ENCODE measurements at regions of chr1 and their contacts with region 1.

Region 1: GRCh38 chr1:35014486-35014885 is 17.3 kb downstream of the ZMYM6 start:
- DNase-seq: no peak
- ATAC-seq: no peak
- H3K4me3 ChIP-seq: no peak overlapping the region
- H3K4me3 Mint-ChIP-seq: no peak overlapping the region
- H3K27ac ChIP-seq: no peak overlapping the region
- H3K27ac Mint-ChIP-seq: no peak overlapping the region
- H3K4me1 ChIP-seq: no peaks in the 10 kb centered on the region
- H3K4me1 Mint-ChIP-seq: peaks cover 0 to 2% (median 0%) of the 10 kb centered on the region in 3 donors
- H3K27me3 ChIP-seq: no peaks in the 10 kb centered on the region
- H3K27me3 Mint-ChIP-seq: no peaks in the 10 kb centered on the region

Region 2: DNA sequence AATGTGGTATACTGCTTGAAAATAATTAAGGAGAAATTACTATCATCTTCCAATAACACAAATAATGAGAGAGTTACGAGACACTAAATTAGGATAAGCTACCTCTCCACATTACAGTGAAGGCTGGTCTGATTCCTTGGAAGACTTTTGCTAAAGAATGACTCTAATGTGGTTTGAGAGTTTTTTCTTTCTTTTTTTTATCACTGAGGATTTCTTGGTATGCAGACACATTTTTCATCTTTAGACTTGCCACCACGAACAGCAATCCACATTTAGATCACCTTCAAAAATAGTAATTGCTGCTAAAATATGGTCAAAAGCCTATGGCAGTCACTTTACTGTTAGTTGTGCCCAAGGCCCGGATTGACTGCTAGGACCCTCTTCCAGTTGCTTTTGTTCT is 12.7 kb before region 1 on chr1:
- CTCF ChIA-PET with region 1: interaction called in 1 of 2 experiments, 12 read pairs
- POLR2A ChIA-PET with region 1: no interaction called
- DNase-seq: no peak
- ATAC-seq: no peak
- H3K4me3 ChIP-seq: no peak overlapping the region
- H3K4me3 Mint-ChIP-seq: no peak overlapping the region
- H3K27ac ChIP-seq: no peak overlapping the region
- H3K27ac Mint-ChIP-seq: no peak overlapping the region
- H3K4me1 ChIP-seq: no peaks in the 10 kb centered on the region
- H3K4me1 Mint-ChIP-seq: no peaks in the 10 kb centered on the region
- H3K27me3 ChIP-seq: no peaks in the 10 kb centered on the region
- H3K27me3 Mint-ChIP-seq: no peaks in the 10 kb centered on the region

Region 3: GRCh38 chr1:35126546-35126945 is 112.1 kb after region 1 on chr1:
- CTCF ChIA-PET with region 1: no interaction called
- POLR2A ChIA-PET with region 1: no interaction called
- DNase-seq: no peak
- ATAC-seq: no peak
- H3K4me3 ChIP-seq: no peak overlapping the region
- H3K4me3 Mint-ChIP-seq: no peak overlapping the region
- H3K27ac ChIP-seq: no peak overlapping the region
- H3K27ac Mint-ChIP-seq: no peak overlapping the region
- H3K4me1 ChIP-seq: no peaks in the 10 kb centered on the region
- H3K4me1 Mint-ChIP-seq: peaks cover 0 to 2% (median 2%) of the 10 kb centered on the region in 3 donors
- H3K27me3 ChIP-seq: peaks cover 0 to 12% of the 10 kb centered on the region in 2 experiments
- H3K27me3 Mint-ChIP-seq: peaks cover 2 to 3% of the 10 kb centered on the region in 2 donors